Right ventricle myocardium superior (tissue), 1 donor: ENCODE measurements at regions of chr19 and their contacts with region 1.

Region 1: GRCh38 chr19:4732680-4733114 is 9.1 kb upstream of the DPP9 start:
- DNase-seq: no peak
- ATAC-seq: peak; percentile 94

Region 2: GRCh38 chr19:4713384-4713951 is 19.2 kb before region 1 on chr19:
- intact Hi-C with region 1: no loop called
- DNase-seq: peak; percentile 84
- ATAC-seq: peak; percentile 56

Region 3: DNA sequence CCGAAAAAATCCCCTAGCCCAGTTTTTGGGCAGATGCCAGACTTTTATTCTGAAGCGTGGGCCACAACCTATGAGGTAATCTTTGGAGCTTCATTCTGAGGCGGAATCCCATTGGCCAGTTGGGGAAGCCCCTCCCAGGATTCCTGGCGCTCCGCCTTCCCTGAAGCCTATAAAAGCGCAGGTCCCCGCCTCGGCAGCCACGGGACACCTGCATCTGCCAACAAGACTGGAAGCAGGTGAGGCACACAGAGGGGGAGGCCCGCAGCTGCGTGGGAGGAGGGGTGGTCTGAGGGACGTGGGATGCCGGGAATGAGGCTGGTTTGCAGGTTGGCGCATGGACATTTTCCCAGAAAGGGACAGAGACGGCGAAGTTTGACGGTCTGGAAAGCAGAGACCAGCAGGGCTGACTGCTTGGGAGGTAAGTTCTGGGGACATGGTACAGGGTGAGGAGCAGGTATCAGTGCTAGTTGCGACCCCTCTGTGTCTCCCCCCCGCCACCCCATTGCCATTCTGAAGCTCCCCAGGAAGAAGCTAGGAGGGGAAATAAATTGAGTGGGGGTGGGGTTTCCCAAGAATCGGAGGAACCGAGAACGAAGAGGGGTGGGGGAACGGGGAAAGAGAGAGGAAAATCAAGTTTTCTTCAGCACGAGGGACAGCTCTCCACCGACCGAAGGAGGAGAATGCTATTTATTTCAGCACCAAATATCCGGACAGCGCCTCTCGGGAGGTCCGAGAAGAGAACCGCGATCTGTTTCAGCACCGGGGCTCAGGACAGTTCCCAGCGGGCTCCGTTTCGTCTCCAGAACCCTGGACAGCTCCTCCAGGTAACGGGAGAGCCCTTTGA is 36.5 kb after region 1 on chr19:
- intact Hi-C with region 1: no loop called
- DNase-seq: peak; percentile 76
- ATAC-seq: peak; percentile 77

Region 4: GRCh38 chr19:4791170-4792018 is 58.7 kb after region 1 on chr19 and contains the start of gene FEM1A:
- intact Hi-C with region 1: loop called (anchors 5 kb)
- DNase-seq: peak; percentile 99
- ATAC-seq: peak; percentile 98
- total RNA-seq, gene FEM1A: 47.6 TPM

Region 5: DNA sequence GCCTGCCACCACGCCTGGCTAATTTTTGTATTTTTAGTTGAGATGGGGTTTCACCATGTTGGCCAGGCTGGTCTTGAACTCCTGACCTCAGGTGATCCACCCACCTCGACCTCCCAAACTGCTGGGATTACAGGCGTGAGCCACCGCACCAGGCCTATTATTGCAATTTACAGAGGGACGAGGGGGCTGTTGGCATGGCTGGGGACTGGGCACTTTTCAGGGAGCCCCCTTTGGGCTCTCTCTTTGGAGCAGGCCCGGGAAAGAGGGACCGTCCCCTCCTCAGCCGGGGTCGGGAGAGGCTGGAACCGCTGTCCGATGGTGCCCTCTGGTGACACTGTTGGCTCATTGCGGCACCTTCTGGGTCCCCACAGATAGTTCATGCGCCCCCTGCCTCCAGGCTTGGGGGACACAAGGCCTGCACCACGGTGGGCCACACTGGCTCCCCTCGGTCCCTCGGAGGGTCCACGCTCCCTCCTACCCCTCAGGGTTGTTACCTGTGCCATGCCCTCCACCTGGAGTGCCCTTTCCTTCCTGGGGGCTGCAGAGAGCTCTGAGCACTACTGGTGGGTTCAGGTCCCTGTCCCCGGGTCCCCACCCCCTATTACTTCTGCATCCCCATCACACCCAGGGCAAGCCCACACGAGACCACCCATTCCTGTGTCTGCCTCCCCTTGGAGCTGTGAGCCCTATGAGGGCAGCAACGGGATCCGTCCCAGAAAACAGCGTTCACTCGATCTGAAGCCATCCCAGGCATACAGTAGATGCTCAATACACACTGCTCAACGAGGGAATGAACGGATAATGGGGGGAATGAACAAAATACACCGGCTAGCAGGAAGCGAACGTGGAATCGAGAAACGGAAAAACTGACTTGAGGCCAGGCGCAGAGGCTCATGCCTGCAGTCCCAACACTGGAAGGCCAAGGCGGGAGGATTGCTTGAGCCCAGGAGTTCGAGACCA is 71.3 kb after region 1 on chr19:
- intact Hi-C with region 1: loop called (anchors 5 kb)
- DNase-seq: peak; percentile 75
- ATAC-seq: peak; percentile 79

Region 6: DNA sequence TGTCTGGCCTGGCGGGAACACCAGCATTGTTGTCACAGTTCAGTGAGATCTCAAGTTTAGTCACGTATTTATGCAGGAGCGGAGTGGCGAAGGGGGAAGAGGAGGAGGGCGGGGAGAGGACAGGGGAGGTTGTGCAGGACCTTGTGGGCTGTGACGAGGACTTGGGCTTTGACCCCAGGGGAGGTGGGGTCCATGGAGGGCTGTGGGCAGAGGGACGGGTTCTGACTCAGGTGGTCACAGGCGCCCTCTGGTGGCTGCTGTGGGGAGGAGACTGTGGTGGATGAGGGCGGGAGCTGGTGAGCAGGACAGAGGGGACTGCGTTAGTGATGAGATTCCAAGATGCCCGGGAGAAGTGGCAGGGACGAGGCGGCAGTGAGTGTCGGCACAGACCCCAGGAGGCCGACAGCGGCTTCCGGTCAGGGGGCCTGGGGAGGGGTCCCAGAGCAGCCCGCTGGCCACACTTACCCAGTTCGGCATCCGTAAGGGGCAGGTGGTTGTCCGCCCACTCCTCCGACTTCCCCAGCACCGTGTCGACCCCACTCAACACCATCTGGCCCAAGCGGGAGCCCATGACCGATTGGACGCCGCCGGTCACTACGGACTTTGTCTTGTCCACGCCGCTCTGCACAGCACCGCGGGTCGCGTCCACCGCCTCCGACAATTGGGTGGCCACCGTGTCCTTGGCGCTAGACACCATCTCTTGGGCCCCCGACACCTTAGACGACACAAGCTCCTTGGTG is 119.0 kb after region 1 on chr19:
- intact Hi-C with region 1: no loop called
- DNase-seq: peak; percentile 88
- ATAC-seq: peak; percentile 91

Region 7: GRCh38 chr19:5170329-5170745 is 437.6 kb after region 1 on chr19:
- intact Hi-C with region 1: no loop called
- DNase-seq: no peak
- ATAC-seq: no peak